ENCODE measurements at regions of chr17 and their contacts with region 1.

Region 1: GRCh38 chr17:49022391-49022941 is 25.3 kb downstream of the IGF2BP1 start:
- DNase-seq: no peak
- ATAC-seq: no peak
- H3K4me3 ChIP-seq: no peak overlapping the region
- H3K27ac ChIP-seq: no peak overlapping the region
- H3K4me1 ChIP-seq: no peaks in the 10 kb centered on the region
- H3K27me3 ChIP-seq: peaks cover 0 to 53% (median 2%) of the 10 kb centered on the region in 9 donors
- CTCF ChIP-seq: no peak
- POLR2A ChIP-seq: no peak

Region 2: DNA sequence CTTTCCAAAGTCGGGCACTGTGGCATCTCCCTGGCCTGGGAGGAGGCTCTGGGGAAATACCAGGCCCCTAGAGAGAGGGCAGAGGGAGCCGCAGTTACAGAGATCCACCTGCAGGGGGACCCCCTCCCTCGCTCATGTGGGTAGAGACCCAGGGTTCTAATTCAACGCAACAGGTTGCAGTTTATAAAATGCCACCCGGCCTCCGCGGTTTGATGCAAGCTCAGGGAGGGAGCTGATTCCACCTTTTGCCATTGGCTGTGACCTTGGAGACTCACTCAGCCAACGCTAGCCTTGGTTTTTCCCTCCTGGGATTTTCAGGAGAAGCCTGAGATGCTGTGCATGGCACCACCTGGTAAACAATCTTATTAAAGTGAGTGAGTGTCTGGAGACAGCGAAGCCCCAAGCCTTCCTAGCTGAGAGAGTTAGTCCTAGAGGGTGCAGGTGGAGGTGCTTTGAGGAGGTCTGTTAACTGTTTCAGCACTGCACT is 217.5 kb before region 1 on chr17:
- intact Hi-C with region 1: loop called in 1 of 10 experiments (anchors 10 kb)
- DNase-seq: peak in 4 of 5 donors; percentile 33 to 70 (median 44)
- ATAC-seq: peak in 3 of 4 donors; percentile 86 to 90 (median 87)
- H3K4me3 ChIP-seq: no peak overlapping the region
- H3K27ac ChIP-seq: no peak overlapping the region
- H3K4me1 ChIP-seq: peaks cover 0 to 8% (median 3%) of the 10 kb centered on the region in 12 donors
- H3K27me3 ChIP-seq: peaks cover 0 to 9% (median 0%) of the 10 kb centered on the region in 9 donors
- CTCF ChIP-seq: peak; percentile 81 to 95 (median 90)
- POLR2A ChIP-seq: no peak

Measured in heart left ventricle (tissue), 16 donors.